Heart right ventricle (tissue), 16 donors: ENCODE measurements at regions of chr11 and their contacts with region 1.

Region 1: GRCh38 chr11:110195845-110196754 is 100.3 kb downstream of the RDX start:
- DNase-seq: no peak
- ATAC-seq: no peak
- H3K4me3 ChIP-seq: no peak overlapping the region
- H3K27ac ChIP-seq: no peak overlapping the region
- H3K4me1 ChIP-seq: no peaks in the 10 kb centered on the region
- H3K27me3 ChIP-seq: no peaks in the 10 kb centered on the region
- CTCF ChIP-seq: no peak

Region 2: GRCh38 chr11:109946322-109946846 is 249.7 kb before region 1 on chr11:
- intact Hi-C with region 1: loop called in 4 of 10 experiments (anchors 10 kb)
- DNase-seq: peak; percentile 74 to 88
- ATAC-seq: peak; percentile 90 to 100 (median 98)
- H3K4me3 ChIP-seq: peak overlapping the region in 8 of 10 donors; percentile 11 to 42 (median 35)
- H3K27ac ChIP-seq: peak overlapping the region in 9 of 10 donors; percentile 34 to 77 (median 52)
- H3K4me1 ChIP-seq: peaks cover 0 to 9% (median 4%) of the 10 kb centered on the region in 9 donors
- H3K27me3 ChIP-seq: no peaks in the 10 kb centered on the region
- CTCF ChIP-seq: peak; percentile 75 to 95 (median 92)

Region 3: DNA sequence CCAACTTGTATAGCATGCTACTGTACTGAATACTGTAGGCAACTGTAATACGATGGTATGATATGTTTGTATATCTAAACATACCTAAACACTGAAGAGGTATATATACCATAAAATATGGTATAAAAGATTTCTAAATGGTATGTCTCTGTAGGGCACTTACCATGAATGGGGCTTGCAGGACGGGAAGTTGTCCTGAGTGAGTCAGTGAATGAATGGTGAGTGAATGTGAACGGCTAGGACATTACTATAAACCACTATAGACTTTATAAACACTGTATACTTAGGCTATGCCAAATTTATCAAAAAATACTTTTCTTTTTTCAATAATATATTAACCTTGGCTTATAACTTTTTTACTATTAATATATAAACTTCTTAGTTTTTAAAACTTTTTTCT is 36.1 kb before region 1 on chr11:
- intact Hi-C with region 1: no loop called
- DNase-seq: no peak
- ATAC-seq: peak in 1 of 8 donors; percentile 40
- H3K4me3 ChIP-seq: no peak overlapping the region
- H3K27ac ChIP-seq: no peak overlapping the region
- H3K4me1 ChIP-seq: peaks cover 0 to 5% (median 0%) of the 10 kb centered on the region in 9 donors
- H3K27me3 ChIP-seq: no peaks in the 10 kb centered on the region
- CTCF ChIP-seq: no peak

Region 4: GRCh38 chr11:110362971-110363509 is 166.9 kb after region 1 on chr11:
- intact Hi-C with region 1: loop called in 5 of 10 experiments (anchors 1 to 5 kb)
- DNase-seq: peak in 1 of 2 donors; percentile 20
- ATAC-seq: peak in 7 of 8 donors; percentile 46 to 79 (median 75)
- H3K4me3 ChIP-seq: no peak overlapping the region
- H3K27ac ChIP-seq: peak overlapping the region in 9 of 10 donors; percentile 29 to 72 (median 47)
- H3K4me1 ChIP-seq: peaks cover 0 to 44% (median 24%) of the 10 kb centered on the region in 9 donors
- H3K27me3 ChIP-seq: no peaks in the 10 kb centered on the region
- CTCF ChIP-seq: no peak

Region 5: DNA sequence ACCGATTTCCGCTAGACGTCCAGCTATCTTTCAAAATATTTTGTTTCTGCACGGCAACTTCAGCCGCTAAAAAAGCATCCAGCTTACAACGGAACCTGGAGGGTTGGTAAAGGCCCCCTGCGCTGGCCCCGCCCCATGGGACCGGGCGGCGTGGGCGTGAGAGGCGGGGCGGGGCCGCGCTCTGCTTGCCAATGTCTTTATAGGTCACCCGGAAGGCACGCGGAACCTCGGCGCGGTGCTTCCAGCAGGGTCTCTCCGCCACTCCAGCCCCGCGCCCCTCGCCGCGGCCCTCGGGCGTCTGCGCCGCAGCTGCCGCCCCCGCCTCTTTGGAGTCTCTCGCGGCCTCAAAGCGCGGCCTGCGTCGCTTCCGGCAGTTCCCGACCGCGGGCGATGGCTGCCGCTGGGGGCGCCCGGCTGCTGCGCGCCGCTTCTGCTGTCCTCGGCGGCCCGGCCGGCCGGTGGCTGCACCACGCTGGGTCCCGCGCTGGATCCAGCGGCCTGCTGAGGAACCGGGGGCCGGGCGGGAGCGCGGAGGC is 233.7 kb after region 1 on chr11 and contains the start of gene FDX1:
- intact Hi-C with region 1: loop called in 7 of 10 experiments (anchors 2 to 5 kb)
- DNase-seq: peak; percentile 77 to 82
- ATAC-seq: peak; percentile 91 to 97 (median 93)
- H3K4me3 ChIP-seq: peak within 1 kb of the TSS; percentile 55 to 94 (median 88)
- H3K27ac ChIP-seq: peak within 1 kb of the TSS; percentile 84 to 96 (median 94)
- H3K4me1 ChIP-seq: peaks cover 0 to 44% (median 36%) of the 10 kb centered on the region in 9 donors
- H3K27me3 ChIP-seq: no peaks in the 10 kb centered on the region
- CTCF ChIP-seq: peak; percentile 43 to 90 (median 79)
- total RNA-seq, gene FDX1: 18.4 to 30.3 (median 22.0) TPM

Region 6: GRCh38 chr11:111230122-111230465 is 1034.0 kb after region 1 on chr11:
- intact Hi-C with region 1: loop called in 4 of 10 experiments (anchors 5 to 10 kb)
- DNase-seq: no peak
- ATAC-seq: peak in 7 of 8 donors; percentile 23 to 56 (median 39)
- H3K4me3 ChIP-seq: peak overlapping the region in 7 of 10 donors; percentile 38 to 62 (median 57)
- H3K27ac ChIP-seq: no peak overlapping the region
- H3K4me1 ChIP-seq: peaks cover 0 to 10% (median 3%) of the 10 kb centered on the region in 9 donors
- H3K27me3 ChIP-seq: peaks cover 0 to 8% (median 0%) of the 10 kb centered on the region in 7 donors
- CTCF ChIP-seq: no peak